Cardiac septum (tissue), 1 donor: ENCODE measurements at regions of chr7 and their contacts with region 1.

Region 1: GRCh38 chr7:158695726-158696452 is 8.7 kb downstream of the NCAPG2 start:
- DNase-seq: peak; percentile 87

Region 2: GRCh38 chr7:158976849-158977593 is 281.1 kb after region 1 on chr7:
- intact Hi-C with region 1: loop called (anchors 2 kb)
- DNase-seq: peak; percentile 88